Left cardiac atrium (tissue), 4 donors: ENCODE measurements at regions of chr15 and their contacts with region 1.

Region 1: DNA sequence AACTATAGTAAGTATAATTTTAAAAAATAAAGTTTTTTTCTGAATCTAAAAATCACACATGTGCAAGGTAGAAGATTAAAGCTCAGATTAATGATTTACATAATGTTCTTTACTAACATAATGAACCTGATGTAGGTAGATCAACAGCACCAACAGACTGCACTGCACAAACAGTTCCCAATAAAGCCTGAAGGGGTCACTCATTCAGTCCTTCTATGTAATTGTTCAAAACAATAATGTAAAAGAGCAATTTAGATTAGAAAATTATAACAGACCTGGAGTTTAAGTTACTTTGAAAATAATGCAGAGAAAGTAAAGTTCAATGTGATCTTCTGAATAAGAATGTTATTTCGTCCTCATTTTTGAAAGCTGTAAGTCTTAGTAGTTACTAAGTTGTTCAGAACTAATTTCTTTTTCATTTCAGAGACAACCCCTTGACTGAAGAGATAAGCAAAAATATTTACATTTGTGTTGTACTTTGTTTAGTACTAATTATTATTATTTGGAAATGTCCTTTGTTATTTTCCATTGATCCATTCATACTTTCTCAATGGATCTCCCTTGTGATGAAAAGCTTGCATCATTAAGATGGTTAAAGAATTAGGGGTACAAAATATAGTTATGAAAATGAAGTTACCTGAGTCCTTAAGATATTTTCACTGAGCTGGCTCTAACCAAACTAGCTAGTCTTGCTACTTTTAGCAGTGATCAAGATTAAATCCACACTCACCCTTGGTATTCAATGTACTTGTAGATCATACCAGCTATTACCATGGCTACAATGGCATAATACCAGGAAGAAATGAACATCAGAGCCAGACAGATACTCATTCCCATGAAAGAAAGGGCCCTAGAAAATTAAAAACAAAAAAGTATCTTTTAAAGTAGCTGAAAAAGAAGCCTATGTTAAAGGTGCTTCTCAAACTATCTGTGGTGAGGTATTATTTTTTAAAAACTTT is 16.8 kb downstream of the EMC4 start:
- DNase-seq: no peak
- ATAC-seq: no peak

Region 2: GRCh38 chr15:34367101-34368081 is 125.7 kb after region 1 on chr15 and contains the start of gene LPCAT4:
- intact Hi-C with region 1: loop called in 1 of 2 experiments (anchors 5 kb)
- DNase-seq: peak; percentile 92
- ATAC-seq: peak; percentile 97
- total RNA-seq, gene LPCAT4: 31.3 to 43.7 TPM

Region 3: DNA sequence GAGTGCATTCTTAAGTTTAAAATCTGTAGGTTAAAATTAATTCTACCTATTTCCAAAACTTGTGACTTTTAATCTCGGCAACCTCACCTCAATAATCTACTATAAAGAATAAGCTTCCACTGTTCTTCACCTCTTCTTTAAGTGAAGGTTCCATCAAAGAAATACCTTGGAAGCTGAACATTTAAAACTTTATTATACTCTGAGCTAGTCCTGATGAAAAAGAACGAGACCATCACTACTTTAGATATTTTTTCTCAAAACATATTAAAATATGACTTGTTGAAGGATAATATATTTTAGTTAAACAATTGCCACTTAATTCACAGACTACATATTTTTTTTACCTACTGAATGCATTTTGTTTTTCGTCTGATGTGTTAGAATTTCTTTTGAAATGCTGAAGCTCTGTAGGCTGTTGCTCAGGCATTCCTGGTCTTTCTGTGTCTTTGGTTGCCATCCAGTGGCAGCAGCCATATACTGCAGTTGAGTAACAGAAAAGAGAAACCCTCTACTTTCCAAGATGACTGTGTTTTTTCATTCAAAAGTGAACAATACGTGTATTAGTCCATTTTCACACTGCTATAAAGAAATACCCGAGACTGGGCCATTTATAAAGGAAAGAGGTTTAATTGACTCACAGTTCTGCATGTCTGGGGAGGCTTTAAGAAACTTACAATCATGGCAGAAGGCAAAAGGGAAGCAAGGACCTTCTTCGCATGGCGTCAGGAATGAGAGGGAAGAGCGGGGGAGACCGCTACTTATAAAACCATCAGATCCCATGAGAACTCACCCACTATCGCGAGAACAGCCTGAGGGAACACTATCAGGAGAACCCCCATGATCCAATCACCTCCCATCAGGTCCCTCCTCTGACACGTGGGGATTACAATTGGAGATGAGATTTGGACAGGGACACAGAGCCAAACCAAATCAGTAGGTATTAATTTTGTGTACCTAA is 346.3 kb after region 1 on chr15:
- intact Hi-C with region 1: loop called in 1 of 2 experiments (anchors 2 kb)
- DNase-seq: peak; percentile 65
- ATAC-seq: peak; percentile 57 to 64